ENCODE measurements at regions of chr7 and their contacts with region 1.

Region 1: DNA sequence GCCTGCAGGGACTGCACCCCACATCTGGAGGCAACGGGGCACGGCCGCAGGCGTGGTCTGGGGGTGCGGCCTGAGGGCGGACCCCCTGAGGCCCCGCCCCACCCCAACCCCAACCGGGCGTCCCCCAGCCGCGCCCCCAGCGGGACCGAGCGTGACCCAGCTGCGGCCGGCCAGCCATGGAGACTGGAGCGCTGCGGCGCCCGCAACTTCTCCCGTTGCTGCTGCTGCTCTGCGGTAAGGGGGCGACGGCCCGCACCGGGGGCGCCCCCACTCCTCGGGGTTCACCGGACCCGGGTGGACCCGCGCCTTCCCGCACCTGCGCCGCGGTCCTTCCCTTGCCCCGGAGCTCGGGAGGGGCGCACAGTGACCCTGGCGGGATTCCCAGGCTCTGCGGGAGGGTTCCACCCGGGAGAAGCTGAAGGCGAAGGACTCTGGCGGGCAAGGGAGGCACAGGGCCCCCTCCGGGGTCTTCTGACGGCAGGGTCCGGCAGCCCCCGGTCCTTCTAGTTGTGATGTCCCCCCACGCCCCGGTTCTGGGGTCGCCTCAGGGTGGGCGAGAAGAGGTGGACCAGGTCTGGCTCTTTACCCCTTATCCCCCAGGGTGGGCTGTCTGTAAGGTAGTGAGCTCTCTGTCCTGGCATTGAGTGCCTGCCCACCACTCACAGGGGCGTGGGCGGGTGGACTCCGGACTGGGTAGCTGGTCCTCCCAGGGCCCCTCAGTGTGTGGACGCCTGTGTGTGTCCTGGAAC is at the start of gene RAMP3:
- DNase-seq: no peak
- H3K4me3 ChIP-seq: no peak within 1 kb of the TSS
- H3K4me1 ChIP-seq: no peaks in the 10 kb centered on the region; the same call in 1 of the 2 replicates
- H3K27me3 ChIP-seq: 0 out of 2 replicates have a peak, but pooled peaks cover 7% of the 10 kb centered on the region

Region 2: DNA sequence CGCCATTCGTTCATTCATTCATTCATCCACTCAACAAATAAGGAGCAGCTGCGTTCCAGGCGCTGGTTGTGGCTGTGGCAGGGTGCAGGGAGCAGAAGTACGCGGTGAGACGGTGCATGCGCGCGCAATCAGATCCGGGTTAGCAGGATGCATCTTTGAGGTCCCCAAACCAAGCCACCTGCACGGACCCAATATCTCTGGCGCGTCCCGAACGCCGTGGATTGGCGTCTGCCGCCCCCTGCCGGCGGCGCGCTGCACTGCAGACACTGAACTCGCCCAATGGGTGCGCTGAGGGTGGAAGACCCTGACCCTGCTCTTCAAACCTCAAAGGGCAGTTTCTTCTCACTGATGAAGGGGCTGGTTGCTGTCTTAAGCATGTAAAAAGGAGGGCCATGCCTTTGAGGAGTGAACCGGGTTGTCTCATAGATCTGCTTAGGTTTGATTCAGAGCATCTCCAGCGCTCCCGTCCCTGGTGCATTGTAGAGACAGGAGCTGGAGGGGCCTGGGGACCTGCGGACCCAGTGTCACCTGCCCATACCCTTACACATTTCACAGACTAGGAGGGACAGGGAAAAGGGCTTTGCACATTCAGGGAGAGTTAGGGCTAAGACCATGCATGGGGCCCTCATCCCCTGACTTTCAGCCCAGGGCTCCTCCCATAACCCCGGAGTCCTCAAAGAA is 102.3 kb after region 1 on chr7:
- in situ Hi-C with region 1: loop called (anchors 5 kb)
- DNase-seq: peak; percentile 43 to 82
- H3K4me3 ChIP-seq: no peak overlapping the region
- H3K4me1 ChIP-seq: no peaks in the 10 kb centered on the region
- H3K27me3 ChIP-seq: no peaks in the 10 kb centered on the region; the same call in 1 of the 2 replicates

Region 3: DNA sequence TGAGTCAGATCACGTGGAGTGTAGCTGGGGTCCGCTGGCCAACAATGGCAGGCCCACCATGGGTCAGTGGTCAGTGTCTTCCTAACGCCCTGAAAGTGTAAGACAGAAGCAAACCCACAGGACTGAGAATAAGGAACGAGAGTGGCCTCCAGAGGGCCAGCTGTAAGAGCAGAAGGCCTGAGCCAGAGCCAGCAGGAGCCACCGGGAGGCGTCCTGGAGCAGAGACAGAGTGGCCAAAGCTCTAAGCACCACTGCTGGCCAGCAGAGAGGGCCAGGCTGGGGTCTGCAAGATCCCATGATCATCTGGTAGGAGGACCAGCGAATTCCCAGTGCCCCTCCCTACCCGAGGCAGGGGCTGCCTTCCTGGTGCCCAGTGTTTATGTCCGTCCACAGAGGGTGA is 705.9 kb after region 1 on chr7:
- in situ Hi-C with region 1: loop called (anchors 10 kb)
- DNase-seq: no peak
- H3K4me3 ChIP-seq: no peak overlapping the region
- H3K4me1 ChIP-seq: no peaks in the 10 kb centered on the region
- H3K27me3 ChIP-seq: no peaks in the 10 kb centered on the region

Measured in HAP-1 (cell line).